Activated B cell treated with CpG ODN at 0.5 μM for 24 hours (primary cell): ENCODE measurements at regions of chr17 and their contacts with region 1.

Region 1: DNA sequence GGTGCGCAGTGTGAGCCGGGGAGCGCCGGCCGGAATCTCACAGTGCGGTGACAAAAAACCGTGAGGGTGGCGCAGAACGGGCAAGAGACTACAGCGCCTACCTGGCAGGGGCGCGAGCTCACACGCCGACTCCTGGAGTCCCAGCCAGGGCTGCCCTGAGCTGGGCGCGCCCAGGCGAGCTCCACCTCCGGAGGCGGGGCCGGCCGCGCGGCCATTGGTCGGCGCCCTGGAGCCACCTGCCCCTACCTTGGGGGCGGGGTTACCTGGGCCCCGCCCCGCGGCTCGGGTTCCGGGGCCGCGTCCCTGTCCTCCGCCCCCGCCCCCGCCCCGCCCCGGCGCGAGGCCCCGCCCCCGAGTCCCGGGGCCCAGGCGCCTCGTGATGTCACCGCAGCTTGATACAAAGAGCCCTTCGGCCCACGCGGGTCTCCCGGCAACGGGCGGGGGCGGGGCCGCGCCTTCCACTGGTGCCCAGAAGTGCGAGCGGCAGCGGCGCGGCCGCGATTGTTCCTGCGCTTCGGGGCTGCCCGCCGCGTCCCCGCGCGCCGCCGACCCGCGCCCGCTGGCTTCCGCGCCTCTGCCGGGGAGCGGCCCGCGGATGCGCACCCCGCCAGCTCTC is 96.3 kb downstream of the RAB11FIP4 start:
- DNase-seq: peak; percentile 89
- ATAC-seq: peak; percentile 85
- H3K4me3 Mint-ChIP-seq: peak overlapping the region; percentile 89
- H3K27ac Mint-ChIP-seq: peak overlapping the region; percentile 87
- H3K4me1 Mint-ChIP-seq: peaks cover 53% of the 10 kb centered on the region
- H3K27me3 Mint-ChIP-seq: no peaks in the 10 kb centered on the region
- CTCF ChIP-seq: no peak

Region 2: GRCh38 chr17:31313982-31314784 is 173.6 kb before region 1 on chr17 and contains the start of gene EVI2B:
- CTCF ChIA-PET with region 1: interaction called, 3 read pairs
- POLR2A ChIA-PET with region 1: interaction called, 7 read pairs
- intact Hi-C with region 1: loop called (anchors 1 kb)
- DNase-seq: no peak
- ATAC-seq: peak; percentile 25
- H3K4me3 Mint-ChIP-seq: peak within 1 kb of the TSS; percentile 93
- H3K27ac Mint-ChIP-seq: peak within 1 kb of the TSS; percentile 94
- H3K4me1 Mint-ChIP-seq: peaks cover 63% of the 10 kb centered on the region
- H3K27me3 Mint-ChIP-seq: no peaks in the 10 kb centered on the region
- CTCF ChIP-seq: no peak
- total RNA-seq, gene EVI2B: 104 and 111 TPM in 2 replicates

Region 3: DNA sequence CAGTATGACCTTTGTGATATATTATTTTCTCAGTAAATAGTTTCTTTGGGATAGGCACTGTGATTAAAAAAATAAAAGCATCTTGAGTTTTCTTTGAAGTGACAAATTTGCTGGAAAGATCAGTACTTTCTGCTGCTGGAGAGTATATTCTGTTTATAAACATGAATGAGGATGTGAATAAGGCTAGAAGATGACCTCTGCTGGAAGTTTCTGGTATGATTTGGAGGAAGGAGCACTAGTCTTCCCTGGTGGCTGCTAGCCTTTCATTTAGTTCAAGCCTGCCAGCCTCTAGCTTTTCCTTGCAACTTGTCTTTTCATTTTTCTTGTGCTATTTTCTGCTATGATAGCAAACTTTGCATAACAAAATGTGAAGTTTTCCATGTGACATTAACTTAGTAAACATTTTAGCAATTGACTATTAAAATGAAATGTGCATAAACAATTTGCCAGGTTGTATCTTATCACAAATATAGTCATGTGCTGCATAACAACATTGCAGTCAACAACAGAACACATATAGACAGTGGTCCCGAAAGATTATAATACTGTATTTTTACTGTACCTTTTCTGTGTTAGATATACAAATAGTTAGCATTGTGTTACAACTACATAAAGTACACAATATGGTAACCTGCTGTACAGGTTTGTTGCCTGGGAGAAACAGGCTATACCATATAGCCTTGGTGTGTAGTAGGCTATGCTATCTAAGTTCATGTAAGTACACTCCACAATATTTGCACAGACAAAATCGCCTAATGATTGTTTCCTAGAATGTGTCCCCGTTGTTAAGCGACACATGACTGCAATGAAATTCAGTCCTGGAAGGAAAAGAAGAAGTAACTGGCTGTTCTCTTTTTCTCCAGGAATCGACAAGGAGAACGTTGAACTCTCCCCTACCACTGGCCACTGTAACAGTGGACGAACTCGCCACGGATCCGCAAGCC is 114.3 kb before region 1 on chr17:
- CTCF ChIA-PET with region 1: no interaction called
- POLR2A ChIA-PET with region 1: no interaction called
- intact Hi-C with region 1: no loop called
- DNase-seq: no peak
- ATAC-seq: peak; percentile 84
- H3K4me3 Mint-ChIP-seq: no peak overlapping the region
- H3K27ac Mint-ChIP-seq: no peak overlapping the region
- H3K4me1 Mint-ChIP-seq: peaks cover 35% of the 10 kb centered on the region
- H3K27me3 Mint-ChIP-seq: no peaks in the 10 kb centered on the region
- CTCF ChIP-seq: no peak

Region 4: GRCh38 chr17:31469959-31470358 is 17.8 kb before region 1 on chr17:
- CTCF ChIA-PET with region 1: no interaction called
- POLR2A ChIA-PET with region 1: no interaction called
- intact Hi-C with region 1: no loop called
- DNase-seq: no peak
- ATAC-seq: no peak
- H3K4me3 Mint-ChIP-seq: no peak overlapping the region
- H3K27ac Mint-ChIP-seq: no peak overlapping the region
- H3K4me1 Mint-ChIP-seq: no peaks in the 10 kb centered on the region
- H3K27me3 Mint-ChIP-seq: peaks cover 3% of the 10 kb centered on the region
- CTCF ChIP-seq: no peak

Region 5: GRCh38 chr17:31499771-31500554 is 12.2 kb after region 1 on chr17:
- CTCF ChIA-PET with region 1: interaction called, 5 read pairs
- POLR2A ChIA-PET with region 1: interaction called, 11 read pairs
- intact Hi-C with region 1: no loop called
- DNase-seq: no peak
- ATAC-seq: no peak
- H3K4me3 Mint-ChIP-seq: no peak overlapping the region
- H3K27ac Mint-ChIP-seq: no peak overlapping the region
- H3K4me1 Mint-ChIP-seq: peaks cover 52% of the 10 kb centered on the region
- H3K27me3 Mint-ChIP-seq: no peaks in the 10 kb centered on the region
- CTCF ChIP-seq: no peak

Region 6: GRCh38 chr17:31517524-31517923 is 29.8 kb after region 1 on chr17:
- CTCF ChIA-PET with region 1: interaction called, 13 read pairs
- POLR2A ChIA-PET with region 1: interaction called, 207 read pairs
- intact Hi-C with region 1: no loop called
- DNase-seq: no peak
- ATAC-seq: no peak
- H3K4me3 Mint-ChIP-seq: no peak overlapping the region
- H3K27ac Mint-ChIP-seq: peak overlapping the region; percentile 7
- H3K4me1 Mint-ChIP-seq: peaks cover 12% of the 10 kb centered on the region
- H3K27me3 Mint-ChIP-seq: no peaks in the 10 kb centered on the region
- CTCF ChIP-seq: no peak

Region 7: GRCh38 chr17:31549525-31550388 is 62.0 kb after region 1 on chr17:
- CTCF ChIA-PET with region 1: no interaction called
- POLR2A ChIA-PET with region 1: interaction called, 23 read pairs
- intact Hi-C with region 1: no loop called
- DNase-seq: peak; percentile 90
- ATAC-seq: peak; percentile 82
- H3K4me3 Mint-ChIP-seq: peak overlapping the region; percentile 88
- H3K27ac Mint-ChIP-seq: peak overlapping the region; percentile 90
- H3K4me1 Mint-ChIP-seq: peaks cover 25% of the 10 kb centered on the region
- H3K27me3 Mint-ChIP-seq: no peaks in the 10 kb centered on the region
- CTCF ChIP-seq: no peak